ENCODE measurements at regions of chr5 and their contacts with region 1.

Region 1: GRCh38 chr5:177357459-177358351 is at the start of gene RGS14:
- DNase-seq: peak; percentile 71
- ATAC-seq: peak; percentile 89
- H3K4me3 Mint-ChIP-seq: peak within 1 kb of the TSS; percentile 85
- H3K27ac Mint-ChIP-seq: peak within 1 kb of the TSS; percentile 92
- H3K4me1 Mint-ChIP-seq: peaks cover 72% of the 10 kb centered on the region
- H3K27me3 Mint-ChIP-seq: no peaks in the 10 kb centered on the region
- CTCF ChIP-seq: no peak
- total RNA-seq, gene RGS14: 50.6 and 58.3 TPM in 2 replicates

Region 2: GRCh38 chr5:176979669-176980068 is 378.0 kb before region 1 on chr5:
- CTCF ChIA-PET with region 1: no interaction called
- POLR2A ChIA-PET with region 1: no interaction called
- intact Hi-C with region 1: no loop called
- DNase-seq: no peak
- ATAC-seq: no peak
- H3K4me3 Mint-ChIP-seq: no peak overlapping the region
- H3K27ac Mint-ChIP-seq: no peak overlapping the region
- H3K4me1 Mint-ChIP-seq: peaks cover 10% of the 10 kb centered on the region
- H3K27me3 Mint-ChIP-seq: no peaks in the 10 kb centered on the region
- CTCF ChIP-seq: no peak

Region 3: DNA sequence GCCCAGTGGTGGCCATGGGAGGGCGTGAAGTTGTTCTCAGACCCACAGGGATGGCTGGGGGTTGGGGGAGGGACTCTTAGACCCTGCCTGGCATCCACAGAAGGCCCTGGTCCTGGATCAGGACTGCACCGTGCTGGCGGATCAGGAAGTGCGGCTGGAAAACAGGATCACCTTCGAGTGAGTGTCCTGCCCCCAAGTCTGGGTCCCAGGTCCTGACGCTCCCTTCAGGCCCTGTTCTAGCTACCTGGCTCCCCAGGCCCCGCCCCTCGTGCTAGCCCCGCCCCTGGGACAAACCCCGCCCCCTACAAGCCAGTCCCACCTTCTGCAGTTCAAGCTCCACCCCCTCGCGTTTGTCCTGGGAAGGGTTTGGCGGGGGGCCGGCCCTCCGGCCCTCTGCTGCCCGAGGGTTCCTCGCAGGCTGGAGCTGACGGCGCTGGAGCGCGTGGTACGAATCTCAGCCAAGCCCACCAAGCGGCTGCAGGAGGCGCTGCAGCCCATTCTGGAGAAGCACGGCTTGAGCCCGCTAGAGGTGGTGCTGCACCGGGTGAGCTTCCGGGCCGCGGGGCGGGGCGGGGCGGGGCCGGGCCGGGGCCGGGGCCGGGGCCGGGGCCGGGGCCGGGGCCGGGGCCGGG is 12.9 kb after region 1 on chr5:
- CTCF ChIA-PET with region 1: interaction called, 17 read pairs
- POLR2A ChIA-PET with region 1: interaction called, 8 read pairs
- intact Hi-C with region 1: loop called (anchors 1 kb)
- DNase-seq: peak; percentile 48
- ATAC-seq: peak; percentile 85
- H3K4me3 Mint-ChIP-seq: peak overlapping the region; percentile 60
- H3K27ac Mint-ChIP-seq: no peak overlapping the region
- H3K4me1 Mint-ChIP-seq: peaks cover 53% of the 10 kb centered on the region
- H3K27me3 Mint-ChIP-seq: no peaks in the 10 kb centered on the region
- CTCF ChIP-seq: no peak

Region 4: DNA sequence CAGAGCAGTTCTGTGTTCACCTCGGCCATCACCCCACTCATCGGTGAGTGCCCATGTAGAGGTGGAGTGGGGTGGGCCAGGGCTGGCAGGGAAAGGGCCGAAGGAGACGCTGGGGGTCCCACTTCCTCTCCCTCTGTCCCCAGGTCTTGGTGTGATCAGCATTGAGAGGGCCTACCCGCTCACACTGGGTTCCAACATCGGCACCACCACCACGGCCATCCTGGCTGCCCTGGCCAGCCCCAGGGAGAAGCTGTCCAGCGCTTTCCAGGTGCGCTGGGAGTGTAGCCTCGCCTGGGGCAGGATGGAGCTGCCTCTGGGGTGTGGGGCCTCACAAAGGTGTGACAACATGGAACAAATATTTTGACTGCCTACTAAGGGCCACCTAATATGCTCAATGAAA is 39.1 kb after region 1 on chr5:
- CTCF ChIA-PET with region 1: no interaction called
- POLR2A ChIA-PET with region 1: no interaction called
- intact Hi-C with region 1: no loop called
- DNase-seq: no peak
- ATAC-seq: no peak
- H3K4me3 Mint-ChIP-seq: no peak overlapping the region
- H3K27ac Mint-ChIP-seq: no peak overlapping the region
- H3K4me1 Mint-ChIP-seq: peaks cover 4% of the 10 kb centered on the region
- H3K27me3 Mint-ChIP-seq: peaks cover 5% of the 10 kb centered on the region
- CTCF ChIP-seq: no peak

Region 5: DNA sequence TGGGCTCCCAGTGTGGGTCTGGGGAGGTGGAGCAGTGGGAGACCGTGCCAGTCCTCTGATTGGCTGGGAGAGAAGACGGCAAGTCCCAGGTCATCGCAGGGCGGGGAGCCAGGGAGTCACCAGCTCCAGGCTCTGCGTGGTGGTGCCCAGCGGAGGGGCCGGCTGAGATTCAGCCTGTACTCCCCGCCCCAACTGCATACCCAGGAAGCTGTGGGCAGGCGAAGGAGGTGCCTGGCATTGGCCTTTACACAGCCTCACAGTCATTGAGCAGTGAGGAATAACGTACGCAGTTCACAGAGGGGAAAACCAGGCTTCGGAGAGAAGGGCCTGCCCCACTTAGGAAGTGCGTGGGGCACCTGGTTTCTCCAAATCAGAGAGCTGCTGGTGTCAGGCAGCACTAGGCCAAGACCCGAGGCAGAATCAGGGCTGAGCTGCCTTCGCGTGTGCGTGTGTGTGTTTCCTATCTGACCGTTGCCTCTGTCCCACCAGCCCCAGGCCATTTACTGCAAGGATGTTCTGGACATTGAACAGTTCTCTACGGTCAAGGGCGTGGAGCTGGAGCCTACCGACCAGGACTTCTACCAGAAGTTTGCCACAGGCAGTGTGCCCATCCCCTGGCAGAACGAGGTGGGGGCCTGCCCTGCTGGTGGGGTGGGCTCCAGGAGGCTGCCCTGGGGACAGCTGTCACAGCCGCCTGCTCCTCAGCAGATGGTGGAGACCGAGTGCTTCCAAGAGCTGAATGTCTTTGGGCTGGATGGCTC is 82.7 kb after region 1 on chr5:
- CTCF ChIA-PET with region 1: no interaction called
- POLR2A ChIA-PET with region 1: no interaction called
- intact Hi-C with region 1: no loop called
- DNase-seq: no peak
- ATAC-seq: peak; percentile 10
- H3K4me3 Mint-ChIP-seq: no peak overlapping the region
- H3K27ac Mint-ChIP-seq: peak overlapping the region; percentile 50
- H3K4me1 Mint-ChIP-seq: peaks cover 26% of the 10 kb centered on the region
- H3K27me3 Mint-ChIP-seq: no peaks in the 10 kb centered on the region
- CTCF ChIP-seq: no peak

Measured in activated B cell treated with CpG ODN at 0.5 μM for 24 hours (primary cell).